ENCODE measurements at regions of chr11 and their contacts with region 1.

Region 1: DNA sequence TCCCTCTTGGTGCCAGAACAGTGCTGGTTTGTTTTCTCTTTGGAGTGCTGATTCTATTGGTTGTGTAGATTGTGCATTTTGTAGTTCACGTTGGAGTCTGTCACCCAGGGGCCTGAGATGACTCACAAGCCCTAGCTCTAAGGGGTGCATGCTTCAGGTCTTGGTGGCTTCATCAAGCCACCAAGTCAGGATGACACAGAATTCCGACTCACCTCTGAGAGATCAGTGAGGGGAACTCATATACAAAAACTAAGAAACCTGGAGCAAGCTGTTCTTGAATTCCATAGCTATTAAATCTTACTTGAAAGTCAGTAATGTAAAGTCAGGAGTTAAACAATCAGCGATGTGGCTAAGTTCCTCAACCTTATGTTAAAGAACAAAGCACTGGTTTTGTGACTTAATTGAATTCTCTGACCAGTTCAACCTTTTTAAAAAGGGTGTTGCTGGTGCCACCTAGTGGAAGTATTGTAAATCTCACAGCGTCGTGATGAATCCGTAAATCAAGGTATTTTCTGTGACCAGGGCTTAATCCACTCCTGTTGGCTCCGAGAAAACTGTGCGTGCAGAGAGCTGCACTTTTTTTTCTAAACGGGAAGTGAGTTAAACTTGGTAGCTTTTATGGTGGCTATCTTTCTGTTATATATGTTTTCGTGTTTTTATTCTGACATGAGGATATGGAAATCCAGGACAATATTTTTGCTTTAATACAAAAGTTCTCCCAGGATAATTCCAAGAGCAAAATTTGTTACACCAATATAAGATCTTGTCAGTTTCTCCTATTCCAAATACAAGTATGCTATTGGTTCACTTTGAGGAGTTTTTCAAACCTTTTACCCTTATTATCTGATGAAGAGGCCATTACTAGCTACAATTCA is 14.6 kb downstream of the MMP13 start:
- DNase-seq: peak in 5 of 9 experiments; percentile 8 to 56 (median 21)
- ATAC-seq: no peak
- H3K4me3 ChIP-seq: no peak overlapping the region
- H3K4me3 Mint-ChIP-seq: no peak overlapping the region
- H3K27ac ChIP-seq: no peak overlapping the region
- H3K27ac Mint-ChIP-seq: no peak overlapping the region
- H3K4me1 ChIP-seq: no peaks in the 10 kb centered on the region
- H3K4me1 Mint-ChIP-seq: peaks cover 2% of the 10 kb centered on the region
- H3K27me3 ChIP-seq: no peaks in the 10 kb centered on the region
- H3K27me3 Mint-ChIP-seq: peaks cover 11% of the 10 kb centered on the region
- CTCF ChIP-seq: peak; percentile 69

Region 2: DNA sequence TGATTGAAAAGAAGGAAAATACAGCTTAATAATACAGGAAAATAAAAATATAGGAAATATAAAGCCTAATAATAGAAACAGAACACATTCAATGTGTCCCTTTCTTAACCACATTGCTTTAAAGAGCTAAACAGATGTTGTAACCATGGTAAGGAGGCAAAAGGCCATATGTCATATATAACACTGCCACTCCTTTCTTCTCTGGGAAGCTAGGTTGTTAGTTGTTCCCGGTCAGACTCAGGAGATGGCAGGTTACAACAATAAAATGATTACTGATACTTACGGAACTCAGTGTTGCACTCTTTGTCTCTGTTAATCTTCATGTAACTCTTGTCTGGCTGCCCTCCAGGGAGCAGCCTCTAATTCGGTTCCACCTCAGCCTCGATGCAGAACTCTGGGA is 1676.6 kb before region 1 on chr11:
- CTCF ChIA-PET with region 1: no interaction called
- POLR2A ChIA-PET with region 1: no interaction called
- intact Hi-C with region 1: no loop called
- DNase-seq: no peak
- ATAC-seq: no peak
- H3K4me3 ChIP-seq: no peak overlapping the region
- H3K4me3 Mint-ChIP-seq: no peak overlapping the region
- H3K27ac ChIP-seq: no peak overlapping the region
- H3K27ac Mint-ChIP-seq: no peak overlapping the region
- H3K4me1 ChIP-seq: no peaks in the 10 kb centered on the region
- H3K4me1 Mint-ChIP-seq: no peaks in the 10 kb centered on the region
- H3K27me3 ChIP-seq: no peaks in the 10 kb centered on the region
- H3K27me3 Mint-ChIP-seq: no peaks in the 10 kb centered on the region
- CTCF ChIP-seq: no peak

Region 3: GRCh38 chr11:102929972-102930371 is 11.0 kb before region 1 on chr11:
- CTCF ChIA-PET with region 1: interaction called, 13 read pairs
- POLR2A ChIA-PET with region 1: no interaction called
- intact Hi-C with region 1: no loop called
- DNase-seq: no peak
- ATAC-seq: no peak
- H3K4me3 ChIP-seq: no peak overlapping the region
- H3K4me3 Mint-ChIP-seq: no peak overlapping the region
- H3K27ac ChIP-seq: no peak overlapping the region
- H3K27ac Mint-ChIP-seq: no peak overlapping the region
- H3K4me1 ChIP-seq: no peaks in the 10 kb centered on the region
- H3K4me1 Mint-ChIP-seq: no peaks in the 10 kb centered on the region
- H3K27me3 ChIP-seq: no peaks in the 10 kb centered on the region
- H3K27me3 Mint-ChIP-seq: peaks cover 8% of the 10 kb centered on the region
- CTCF ChIP-seq: no peak

Measured in CD8-positive, alpha-beta T cell (primary cell).